ENCODE measurements at regions of chr14 and their contacts with region 1.

Region 1: DNA sequence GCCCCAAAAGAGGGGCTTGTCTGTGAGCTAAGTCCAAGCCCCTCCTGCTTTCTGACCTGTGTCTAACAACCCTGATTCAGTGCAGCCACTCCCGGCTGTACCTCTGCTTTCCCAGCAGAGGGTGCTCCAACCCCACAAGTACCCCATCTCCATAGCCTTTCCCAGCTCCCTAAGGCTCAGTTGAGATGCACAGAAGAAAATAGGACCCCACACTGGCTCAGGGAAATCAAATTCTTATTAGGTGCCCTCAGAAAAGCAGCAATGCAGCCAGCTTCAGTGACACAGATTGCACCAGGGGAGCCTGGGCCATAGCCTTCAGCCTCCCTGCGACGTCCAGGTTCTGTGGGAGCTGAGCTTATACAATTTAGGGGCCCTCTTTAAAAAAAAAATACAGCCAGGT is 49.9 kb downstream of the LRRC74A start:
- DNase-seq: peak in 3 of 4 donors; percentile 54 to 78 (median 57)
- ATAC-seq: peak; percentile 97
- H3K4me3 ChIP-seq: no peak overlapping the region
- H3K27ac ChIP-seq: no peak overlapping the region
- H3K4me1 ChIP-seq: peaks cover 0 to 9% of the 10 kb centered on the region in 2 donors
- H3K27me3 ChIP-seq: no peaks in the 10 kb centered on the region
- CTCF ChIP-seq: peak; percentile 80 to 94

Region 2: DNA sequence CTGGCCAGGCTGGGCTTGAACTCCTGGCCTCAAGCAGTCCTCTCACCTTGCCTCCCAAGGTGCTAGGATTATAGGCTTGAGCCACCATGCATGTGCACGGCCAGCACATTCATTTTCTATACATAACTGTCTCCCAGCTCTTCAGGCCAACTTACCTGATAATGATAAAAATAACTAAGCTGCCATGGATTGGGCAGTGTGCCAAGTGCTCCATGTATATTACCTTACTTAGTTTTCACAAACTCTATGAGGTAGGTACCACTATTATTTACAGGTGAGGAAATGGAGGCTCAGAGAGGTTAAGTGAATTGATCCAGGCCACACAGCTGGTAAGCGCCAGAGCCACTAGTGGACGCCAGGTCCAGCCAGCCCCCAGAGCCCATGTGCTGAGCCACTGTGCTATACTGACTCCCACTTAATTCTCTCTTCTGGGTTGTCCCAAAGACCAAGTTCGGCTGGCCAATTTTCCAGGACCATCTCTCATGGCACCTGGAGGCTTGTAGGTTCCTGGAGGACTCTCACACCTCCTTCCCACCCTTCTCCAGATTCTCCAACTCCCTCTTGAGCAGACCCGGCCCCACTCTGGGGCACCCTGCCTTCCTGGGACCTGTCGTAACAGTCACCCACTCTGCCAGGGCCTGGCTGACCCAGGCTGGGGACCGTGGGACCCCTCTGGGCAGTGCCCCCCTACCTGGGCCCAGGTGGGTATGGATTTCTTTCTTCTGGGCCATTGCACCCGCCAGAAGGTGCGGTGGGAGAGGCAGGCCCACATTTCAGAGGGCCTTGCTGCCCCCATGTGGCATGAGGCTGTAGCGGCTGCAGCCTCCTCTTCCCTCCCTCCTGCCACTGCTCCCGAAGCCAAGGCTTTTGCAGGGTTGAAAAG is 191.8 kb after region 1 on chr14:
- intact Hi-C with region 1: loop called in 1 of 2 experiments (anchors 10 kb)
- DNase-seq: peak in 3 of 4 donors; percentile 63 to 87 (median 79)
- ATAC-seq: peak; percentile 91
- H3K4me3 ChIP-seq: no peak overlapping the region
- H3K27ac ChIP-seq: no peak overlapping the region
- H3K4me1 ChIP-seq: peaks cover 5 to 47% of the 10 kb centered on the region in 2 donors
- H3K27me3 ChIP-seq: no peaks in the 10 kb centered on the region
- CTCF ChIP-seq: peak; percentile 73 to 85

Measured in left lung (tissue), 14 donors.